Heart left ventricle (tissue), 16 donors: ENCODE measurements at regions of chr20 and their contacts with region 1.

Region 1: DNA sequence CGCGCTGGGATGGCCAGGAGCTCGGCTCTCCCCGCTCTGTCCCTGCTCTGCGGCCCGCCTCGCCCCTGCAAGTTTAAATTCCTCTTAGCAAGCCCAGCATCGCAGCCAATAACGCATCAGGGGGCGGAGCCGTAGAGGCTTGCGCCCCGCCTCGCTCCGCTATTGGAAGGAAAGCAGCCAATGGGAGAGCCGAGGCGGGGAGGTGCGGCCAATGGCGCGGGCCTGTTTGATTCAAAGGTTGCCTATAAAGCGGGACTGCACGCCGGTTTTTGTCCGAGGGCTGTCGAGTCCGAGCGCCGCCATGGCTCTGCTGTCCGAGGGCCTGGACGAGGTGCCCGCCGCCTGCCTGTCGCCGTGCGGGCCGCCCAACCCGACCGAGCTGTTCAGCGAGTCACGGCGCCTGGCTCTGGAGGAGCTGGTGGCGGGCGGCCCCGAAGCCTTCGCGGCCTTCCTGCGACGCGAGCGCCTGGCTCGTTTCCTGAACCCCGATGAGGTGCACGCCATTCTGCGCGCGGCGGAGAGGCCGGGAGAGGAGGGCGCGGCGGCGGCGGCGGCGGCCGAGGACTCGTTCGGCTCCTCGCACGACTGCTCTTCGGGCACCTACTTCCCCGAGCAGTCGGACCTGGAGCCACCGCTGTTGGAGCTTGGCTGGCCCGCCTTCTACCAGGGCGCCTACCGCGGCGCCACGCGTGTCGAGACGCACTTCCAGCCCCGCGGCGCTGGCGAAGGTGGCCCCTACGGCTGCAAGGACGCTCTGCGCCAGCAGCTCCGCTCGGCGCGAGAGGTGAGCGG is at the start of gene FAM83D:
- DNase-seq: peak; percentile 91 to 96 (median 96)
- ATAC-seq: peak; percentile 97 to 98 (median 98)
- H3K4me3 ChIP-seq: peak within 1 kb of the TSS; percentile 22 to 76 (median 58)
- H3K27ac ChIP-seq: peak within 1 kb of the TSS in 2 of 12 donors; percentile 15 to 81
- H3K4me1 ChIP-seq: peaks cover 5 to 35% (median 10%) of the 10 kb centered on the region in 12 donors
- H3K27me3 ChIP-seq: no peaks in the 10 kb centered on the region
- CTCF ChIP-seq: peak in 6 of 12 donors; percentile 10 to 94 (median 82)
- POLR2A ChIP-seq: peak in 1 of 2 donors; percentile 65
- total RNA-seq, gene FAM83D: 0.11 to 4.7 (median 0.56) TPM

Region 2: DNA sequence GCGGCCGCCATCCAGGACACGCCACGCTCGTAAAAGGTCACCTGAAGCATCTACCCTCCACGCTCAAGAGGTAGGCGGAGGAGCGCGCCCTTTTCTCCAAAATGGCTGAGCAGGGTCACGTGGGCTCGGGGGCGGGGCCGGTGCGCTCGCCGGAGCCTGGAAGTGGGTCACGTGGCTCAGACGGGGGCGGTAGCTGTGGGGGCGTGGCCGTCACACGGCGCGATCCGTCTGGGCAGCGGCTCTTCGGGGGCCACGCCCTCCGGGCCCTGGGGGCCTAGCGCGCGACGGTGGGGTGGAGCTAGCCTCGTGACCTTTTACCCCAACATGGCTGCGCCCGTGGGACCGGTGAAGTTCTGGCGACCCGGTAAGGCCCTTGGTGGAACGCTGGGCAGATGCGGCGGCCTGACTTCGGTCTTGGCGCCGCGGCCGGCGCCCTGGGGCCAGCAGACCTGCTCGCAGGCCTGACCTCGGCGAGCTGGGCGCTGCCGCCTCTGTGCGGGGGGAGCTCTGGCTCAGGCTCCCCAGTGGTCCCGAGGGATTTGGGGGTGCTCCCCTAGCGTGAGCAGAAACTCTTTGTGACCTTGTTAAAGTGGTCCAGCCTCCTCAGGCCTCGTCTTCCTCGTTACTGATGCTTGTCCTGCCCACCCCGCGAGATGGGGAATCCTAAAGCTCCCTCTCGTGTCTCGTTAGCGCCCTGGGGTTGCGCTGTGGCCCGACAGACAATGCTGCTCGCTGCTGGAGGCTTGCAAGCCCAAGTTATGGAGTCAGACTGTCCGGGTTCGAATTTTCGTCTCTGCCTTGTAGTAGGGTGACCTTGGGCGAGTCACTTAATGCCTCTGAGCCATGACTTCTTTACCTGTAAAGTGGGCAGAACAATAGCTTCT is 35.9 kb after region 1 on chr20 and contains the start of gene DHX35:
- intact Hi-C with region 1: loop called in 5 of 10 experiments (anchors 1 to 5 kb)
- DNase-seq: peak; percentile 98 to 99 (median 99)
- ATAC-seq: peak; percentile 100
- H3K4me3 ChIP-seq: peak within 1 kb of the TSS; percentile 76 to 100 (median 90)
- H3K27ac ChIP-seq: peak within 1 kb of the TSS; percentile 85 to 97 (median 94)
- H3K4me1 ChIP-seq: peaks cover 0 to 25% (median 16%) of the 10 kb centered on the region in 12 donors
- H3K27me3 ChIP-seq: no peaks in the 10 kb centered on the region
- CTCF ChIP-seq: peak in 10 of 12 donors; percentile 16 to 64 (median 35)
- POLR2A ChIP-seq: peak in 1 of 2 donors; percentile 49
- total RNA-seq, gene DHX35: 9.9 to 41.7 (median 11.2) TPM

Region 3: GRCh38 chr20:38975539-38976120 is 49.3 kb after region 1 on chr20:
- intact Hi-C with region 1: loop called in 1 of 10 experiments (anchors 5 kb)
- DNase-seq: no peak
- ATAC-seq: no peak
- H3K4me3 ChIP-seq: no peak overlapping the region
- H3K27ac ChIP-seq: peak overlapping the region in 2 of 12 donors; percentile 14 to 81
- H3K4me1 ChIP-seq: peaks cover 0 to 42% (median 3%) of the 10 kb centered on the region in 12 donors
- H3K27me3 ChIP-seq: no peaks in the 10 kb centered on the region
- CTCF ChIP-seq: no peak
- POLR2A ChIP-seq: no peak

Region 4: GRCh38 chr20:39049684-39050554 is 123.6 kb after region 1 on chr20:
- intact Hi-C with region 1: loop called in 9 of 10 experiments (anchors 1 to 5 kb)
- DNase-seq: peak; percentile 71 to 89 (median 78)
- ATAC-seq: peak; percentile 44 to 89 (median 85)
- H3K4me3 ChIP-seq: peak overlapping the region; percentile 44 to 85 (median 69)
- H3K27ac ChIP-seq: peak overlapping the region in 7 of 12 donors; percentile 1 to 61 (median 43)
- H3K4me1 ChIP-seq: peaks cover 0 to 13% (median 5%) of the 10 kb centered on the region in 12 donors
- H3K27me3 ChIP-seq: peaks cover 0 to 4% (median 0%) of the 10 kb centered on the region in 9 donors
- CTCF ChIP-seq: peak; percentile 96 to 99 (median 98)
- POLR2A ChIP-seq: no peak